HepG2 (cell line): ENCODE measurements at regions of chr7 and their contacts with region 1.

Region 1: GRCh38 chr7:127651556-127652332 is at the start of gene SND1:
- DNase-seq: peak; percentile 99
- ATAC-seq: peak; percentile 96
- H3K4me3 ChIP-seq: peak within 1 kb of the TSS; percentile 86 to 98 (median 98)
- H3K27ac ChIP-seq: peak within 1 kb of the TSS; percentile 88
- H3K4me1 ChIP-seq: peaks cover 64% of the 10 kb centered on the region
- H3K27me3 ChIP-seq: no peaks in the 10 kb centered on the region; a peak in 1 of 5 replicates
- CTCF ChIP-seq: no peak
- EP300 ChIP-seq: no peak
- POLR2A ChIP-seq: peak; percentile 90 to 93
- RAD21 ChIP-seq: peak; percentile 45; the same call in 1 of the 2 replicates
- total RNA-seq, gene SND1: 170 and 182 TPM in 2 replicates

Region 2: DNA sequence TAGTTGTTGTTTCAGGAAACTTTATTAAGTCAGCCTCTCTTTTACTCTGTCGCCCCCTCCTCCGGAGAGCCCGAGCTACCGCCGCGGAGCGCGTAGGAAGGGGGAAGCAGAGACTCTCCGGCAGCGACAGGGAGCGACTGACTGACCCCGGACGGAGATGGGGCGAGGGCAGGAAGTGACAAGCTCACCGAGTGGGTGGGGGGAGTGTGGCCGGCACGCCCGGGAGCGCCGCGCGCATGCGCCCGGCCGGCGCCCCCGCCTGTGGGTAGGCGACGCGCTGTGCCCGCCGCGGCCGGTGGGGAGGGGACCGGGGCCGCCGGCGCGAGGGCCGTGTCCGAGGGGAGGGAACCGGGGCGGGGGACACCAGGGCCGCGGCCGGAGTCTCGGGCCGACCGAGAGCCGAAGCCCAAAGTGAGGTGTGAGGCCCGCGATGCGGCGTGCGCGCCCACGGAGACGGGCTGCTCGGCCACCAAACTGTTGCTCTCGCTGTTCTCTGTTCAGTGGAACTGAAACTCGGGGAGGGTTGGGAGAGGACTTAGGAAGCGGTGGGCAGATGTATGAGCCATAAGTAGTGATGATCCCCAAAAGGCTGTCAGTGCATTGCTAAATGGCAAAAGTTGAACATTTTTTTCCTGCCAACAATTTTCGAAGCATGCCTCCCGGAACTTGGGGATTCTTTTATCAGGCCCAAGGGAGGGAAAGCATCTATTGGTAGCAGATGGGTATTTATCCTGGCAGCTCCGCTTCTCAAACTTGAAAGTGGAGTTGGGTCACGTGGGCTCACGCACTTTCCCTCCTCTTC is 259.0 kb before region 1 on chr7 and contains the start of gene ZNF800:
- CTCF ChIA-PET with region 1: no interaction called
- POLR2A ChIA-PET with region 1: no interaction called
- in situ Hi-C with region 1: no loop called
- intact Hi-C with region 1: loop called (anchors 10 kb)
- DNase-seq: peak; percentile 78
- ATAC-seq: peak; percentile 94
- H3K4me3 ChIP-seq: peak within 1 kb of the TSS; percentile 91 to 100 (median 97)
- H3K27ac ChIP-seq: peak within 1 kb of the TSS; percentile 79
- H3K4me1 ChIP-seq: peaks cover 37% of the 10 kb centered on the region
- H3K27me3 ChIP-seq: no peaks in the 10 kb centered on the region; a peak in 1 of 5 replicates
- CTCF ChIP-seq: no peak
- EP300 ChIP-seq: no peak
- POLR2A ChIP-seq: peak; percentile 76 to 89
- RAD21 ChIP-seq: no peak; the same call in 1 of the 2 replicates
- total RNA-seq, gene ZNF800: 12.7 and 13.7 TPM in 2 replicates

Region 3: GRCh38 chr7:127594490-127594889 is 57.3 kb before region 1 on chr7:
- CTCF ChIA-PET with region 1: no interaction called
- POLR2A ChIA-PET with region 1: no interaction called
- in situ Hi-C with region 1: loop called (anchors 5 kb)
- intact Hi-C with region 1: loop called (anchors 10 kb)
- DNase-seq: peak; percentile 35
- ATAC-seq: peak; percentile 77
- H3K4me3 ChIP-seq: no peak overlapping the region
- H3K27ac ChIP-seq: no peak overlapping the region
- H3K4me1 ChIP-seq: peaks cover 11% of the 10 kb centered on the region
- H3K27me3 ChIP-seq: no peaks in the 10 kb centered on the region; a peak in 2 of 5 replicates
- CTCF ChIP-seq: no peak
- EP300 ChIP-seq: no peak
- POLR2A ChIP-seq: no peak
- RAD21 ChIP-seq: no peak

Region 4: GRCh38 chr7:127667017-127667670 is 15.4 kb after region 1 on chr7:
- CTCF ChIA-PET with region 1: no interaction called
- POLR2A ChIA-PET with region 1: no interaction called
- in situ Hi-C with region 1: no loop called
- intact Hi-C with region 1: no loop called
- DNase-seq: no peak
- ATAC-seq: no peak
- H3K4me3 ChIP-seq: no peak overlapping the region
- H3K27ac ChIP-seq: no peak overlapping the region
- H3K4me1 ChIP-seq: peaks cover 44% of the 10 kb centered on the region
- H3K27me3 ChIP-seq: no peaks in the 10 kb centered on the region
- CTCF ChIP-seq: no peak
- EP300 ChIP-seq: no peak
- POLR2A ChIP-seq: no peak
- RAD21 ChIP-seq: no peak